Activated B cell treated with CpG ODN at 0.5 μM for 24 hours (primary cell): ENCODE measurements at regions of chr5 and their contacts with region 1.

Region 1: DNA sequence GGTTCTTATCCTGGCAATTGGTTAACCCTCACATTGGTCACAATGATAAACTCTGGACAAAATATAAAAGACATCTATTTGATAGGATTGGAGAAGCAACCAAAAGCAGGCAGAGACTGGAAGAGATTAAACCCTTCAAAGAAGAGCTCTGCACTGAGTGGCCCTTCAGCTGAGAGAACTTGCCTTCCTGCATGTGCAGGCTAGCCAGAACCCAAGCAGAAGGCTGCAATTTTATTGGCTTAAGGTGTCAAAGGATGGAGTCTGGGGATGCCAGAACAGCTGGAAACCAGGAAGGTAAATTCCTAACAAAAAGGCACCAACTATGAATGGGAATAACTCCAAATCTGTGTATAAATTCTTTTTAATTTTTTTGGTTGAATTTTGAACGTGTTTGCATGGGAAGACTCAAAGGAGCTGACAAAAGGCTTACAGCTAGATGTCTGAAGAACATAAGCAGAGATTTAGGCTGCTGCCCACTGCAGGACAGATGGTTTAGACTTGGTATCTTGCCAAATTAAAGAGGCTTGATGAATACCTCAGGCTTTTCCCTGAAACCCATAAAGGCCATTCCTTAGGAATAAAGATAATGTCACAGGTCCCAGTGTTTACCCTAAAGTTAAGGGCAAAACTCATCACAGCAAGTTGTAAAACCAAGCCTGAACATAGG is 66.3 kb downstream of the NR2F1 start:
- DNase-seq: no peak
- ATAC-seq: no peak
- H3K4me3 Mint-ChIP-seq: no peak overlapping the region
- H3K27ac Mint-ChIP-seq: no peak overlapping the region
- H3K4me1 Mint-ChIP-seq: peaks cover 13% of the 10 kb centered on the region
- H3K27me3 Mint-ChIP-seq: no peaks in the 10 kb centered on the region
- CTCF ChIP-seq: no peak

Region 2: DNA sequence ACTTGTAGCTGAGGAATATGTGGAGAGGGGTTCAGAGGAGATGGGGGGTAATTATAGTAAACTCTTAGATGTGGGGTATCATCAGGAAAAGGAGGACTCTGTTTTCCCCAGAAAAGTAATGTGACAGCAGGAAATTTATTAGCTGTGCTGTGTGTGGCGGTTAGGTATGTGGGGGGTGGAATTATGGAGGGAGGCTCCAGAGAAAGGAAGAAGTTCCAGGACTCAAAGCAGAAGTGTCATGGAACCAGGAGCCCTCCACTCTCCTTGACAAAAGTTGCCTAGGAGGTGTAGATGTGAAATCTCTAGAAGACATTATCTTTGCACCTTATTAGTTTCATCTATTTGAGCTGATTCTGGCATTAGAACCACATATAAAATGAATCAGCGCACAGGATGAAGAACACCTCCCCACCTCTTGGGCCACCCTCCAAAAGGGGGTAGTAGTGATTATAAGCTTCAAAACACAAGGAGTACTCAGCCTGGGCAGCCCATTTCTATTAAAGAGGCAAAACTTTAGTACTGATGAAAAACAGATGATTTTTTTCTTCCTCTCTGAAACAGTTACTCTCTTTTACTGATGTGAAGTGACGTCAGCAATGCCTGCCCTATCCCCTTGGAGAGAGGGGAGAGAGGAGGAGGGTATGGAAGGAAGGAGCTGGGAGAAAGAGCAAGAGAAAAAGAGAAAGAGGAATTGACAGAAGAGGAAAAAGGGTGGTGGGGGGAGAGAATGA is 48.1 kb before region 1 on chr5:
- CTCF ChIA-PET with region 1: no interaction called
- POLR2A ChIA-PET with region 1: interaction called, 10 read pairs
- intact Hi-C with region 1: no loop called
- DNase-seq: no peak
- ATAC-seq: no peak
- H3K4me3 Mint-ChIP-seq: no peak overlapping the region
- H3K27ac Mint-ChIP-seq: no peak overlapping the region
- H3K4me1 Mint-ChIP-seq: peaks cover 2% of the 10 kb centered on the region
- H3K27me3 Mint-ChIP-seq: peaks cover 29% of the 10 kb centered on the region
- CTCF ChIP-seq: no peak

Region 3: DNA sequence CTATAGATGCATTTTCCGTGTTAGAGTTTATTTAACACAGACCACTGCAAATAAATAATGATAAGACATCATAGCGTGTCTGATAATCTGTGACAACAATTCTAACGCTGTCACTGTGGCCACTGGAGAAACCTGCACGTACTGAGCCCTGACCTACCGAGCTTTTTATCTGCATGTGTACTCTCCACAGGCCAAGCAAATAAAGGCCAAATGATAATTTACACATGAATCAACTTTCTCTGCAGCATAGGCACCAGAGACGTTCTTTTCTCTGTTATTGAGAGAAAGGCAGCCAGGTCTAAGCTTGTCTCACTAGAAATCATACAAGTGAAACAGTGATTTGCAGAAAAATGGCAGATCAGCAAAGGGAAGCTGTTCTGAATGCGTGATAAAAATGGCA is 16.3 kb after region 1 on chr5:
- CTCF ChIA-PET with region 1: no interaction called
- POLR2A ChIA-PET with region 1: no interaction called
- intact Hi-C with region 1: no loop called
- DNase-seq: no peak
- ATAC-seq: no peak
- H3K4me3 Mint-ChIP-seq: no peak overlapping the region
- H3K27ac Mint-ChIP-seq: no peak overlapping the region
- H3K4me1 Mint-ChIP-seq: no peaks in the 10 kb centered on the region
- H3K27me3 Mint-ChIP-seq: no peaks in the 10 kb centered on the region
- CTCF ChIP-seq: no peak